ENCODE measurements at regions of chr3 and their contacts with region 1.

Region 1: GRCh38 chr3:33063651-33064051 is 33.3 kb downstream of the GLB1 start:
- DNase-seq: peak; percentile 42
- ATAC-seq: peak; percentile 76
- H3K4me3 ChIP-seq: no peak overlapping the region
- H3K27ac ChIP-seq: no peak overlapping the region
- H3K4me1 ChIP-seq: peaks cover 22% of the 10 kb centered on the region
- H3K27me3 ChIP-seq: no peaks in the 10 kb centered on the region
- CTCF ChIP-seq: no peak
- EP300 ChIP-seq: no peak
- POLR2A ChIP-seq: no peak
- RAD21 ChIP-seq: no peak

Region 2: DNA sequence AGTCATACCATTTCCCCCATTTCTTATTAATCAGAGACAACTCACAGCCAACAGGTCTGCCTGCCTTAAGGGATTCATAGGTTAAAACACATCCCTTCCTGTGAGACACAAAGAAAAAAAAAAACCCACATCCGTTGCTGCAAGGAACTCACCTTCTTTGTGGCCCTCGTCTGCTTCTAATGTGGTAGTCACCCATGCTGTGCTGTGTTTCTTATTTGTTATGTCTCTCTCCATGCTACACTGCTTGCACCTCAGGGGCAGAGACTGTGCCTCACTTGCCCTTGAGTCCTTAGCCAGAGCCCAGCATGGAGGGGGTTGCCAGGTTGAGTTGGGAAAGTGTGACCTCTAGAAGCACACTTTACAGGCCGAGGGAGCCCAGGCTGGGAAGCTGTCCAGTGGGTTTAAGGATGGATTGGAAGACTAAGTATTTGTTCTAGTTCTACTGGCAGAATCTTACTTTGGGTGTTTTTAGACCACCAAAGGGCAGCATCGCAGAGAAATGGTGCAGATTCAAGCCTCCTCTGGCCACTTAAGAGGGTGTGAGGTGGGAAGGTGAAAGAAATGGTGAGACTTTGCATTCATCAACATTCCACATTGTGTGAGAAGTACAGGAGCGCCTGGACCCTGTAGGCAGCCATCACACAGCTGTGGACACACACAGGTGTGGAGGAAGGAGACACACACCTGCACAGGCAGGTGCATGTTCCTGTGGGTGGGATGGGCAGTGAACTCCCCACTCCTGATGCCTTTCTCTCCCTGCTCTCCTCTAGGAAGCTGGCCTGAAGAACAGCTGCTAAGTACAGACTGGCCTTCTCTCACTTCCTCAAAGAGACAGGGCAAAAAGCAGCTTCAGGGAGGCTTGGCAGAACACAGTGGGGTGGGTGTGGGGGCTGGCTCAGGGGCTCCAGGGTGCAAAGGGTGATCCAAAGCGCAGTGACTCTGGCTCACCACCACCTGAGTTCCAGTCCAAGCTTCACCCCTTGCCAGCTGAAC is 15.5 kb before region 1 on chr3:
- CTCF ChIA-PET with region 1: interaction called, 10 read pairs
- POLR2A ChIA-PET with region 1: no interaction called
- RAD21 ChIA-PET with region 1: no interaction called
- SMC1A ChIA-PET with region 1: interaction called, 4 read pairs
- in situ Hi-C with region 1: no loop called
- intact Hi-C with region 1: no loop called
- DNase-seq: no peak
- ATAC-seq: peak; percentile 91
- H3K4me3 ChIP-seq: no peak overlapping the region
- H3K27ac ChIP-seq: peak overlapping the region; percentile 11
- H3K4me1 ChIP-seq: peaks cover 32% of the 10 kb centered on the region
- H3K27me3 ChIP-seq: no peaks in the 10 kb centered on the region
- CTCF ChIP-seq: no peak
- EP300 ChIP-seq: no peak
- POLR2A ChIP-seq: no peak
- RAD21 ChIP-seq: no peak

Region 3: GRCh38 chr3:33146791-33147445 is 83.3 kb after region 1 on chr3:
- CTCF ChIA-PET with region 1: no interaction called
- POLR2A ChIA-PET with region 1: no interaction called
- RAD21 ChIA-PET with region 1: no interaction called
- SMC1A ChIA-PET with region 1: no interaction called
- in situ Hi-C with region 1: no loop called
- intact Hi-C with region 1: no loop called
- DNase-seq: no peak
- ATAC-seq: no peak
- H3K4me3 ChIP-seq: no peak overlapping the region
- H3K27ac ChIP-seq: no peak overlapping the region
- H3K4me1 ChIP-seq: no peaks in the 10 kb centered on the region
- H3K27me3 ChIP-seq: no peaks in the 10 kb centered on the region
- CTCF ChIP-seq: no peak
- EP300 ChIP-seq: no peak
- POLR2A ChIP-seq: no peak
- RAD21 ChIP-seq: no peak

Region 4: GRCh38 chr3:33868309-33868708 is 804.7 kb after region 1 on chr3:
- CTCF ChIA-PET with region 1: no interaction called
- POLR2A ChIA-PET with region 1: no interaction called
- RAD21 ChIA-PET with region 1: no interaction called
- SMC1A ChIA-PET with region 1: no interaction called
- in situ Hi-C with region 1: no loop called
- intact Hi-C with region 1: no loop called
- DNase-seq: no peak
- ATAC-seq: no peak
- H3K4me3 ChIP-seq: no peak overlapping the region
- H3K27ac ChIP-seq: no peak overlapping the region
- H3K4me1 ChIP-seq: no peaks in the 10 kb centered on the region
- H3K27me3 ChIP-seq: no peaks in the 10 kb centered on the region
- CTCF ChIP-seq: no peak
- EP300 ChIP-seq: no peak
- POLR2A ChIP-seq: no peak
- RAD21 ChIP-seq: no peak